PC-3 (cell line): ENCODE measurements at regions of chr3 and their contacts with region 1.

Region 1: DNA sequence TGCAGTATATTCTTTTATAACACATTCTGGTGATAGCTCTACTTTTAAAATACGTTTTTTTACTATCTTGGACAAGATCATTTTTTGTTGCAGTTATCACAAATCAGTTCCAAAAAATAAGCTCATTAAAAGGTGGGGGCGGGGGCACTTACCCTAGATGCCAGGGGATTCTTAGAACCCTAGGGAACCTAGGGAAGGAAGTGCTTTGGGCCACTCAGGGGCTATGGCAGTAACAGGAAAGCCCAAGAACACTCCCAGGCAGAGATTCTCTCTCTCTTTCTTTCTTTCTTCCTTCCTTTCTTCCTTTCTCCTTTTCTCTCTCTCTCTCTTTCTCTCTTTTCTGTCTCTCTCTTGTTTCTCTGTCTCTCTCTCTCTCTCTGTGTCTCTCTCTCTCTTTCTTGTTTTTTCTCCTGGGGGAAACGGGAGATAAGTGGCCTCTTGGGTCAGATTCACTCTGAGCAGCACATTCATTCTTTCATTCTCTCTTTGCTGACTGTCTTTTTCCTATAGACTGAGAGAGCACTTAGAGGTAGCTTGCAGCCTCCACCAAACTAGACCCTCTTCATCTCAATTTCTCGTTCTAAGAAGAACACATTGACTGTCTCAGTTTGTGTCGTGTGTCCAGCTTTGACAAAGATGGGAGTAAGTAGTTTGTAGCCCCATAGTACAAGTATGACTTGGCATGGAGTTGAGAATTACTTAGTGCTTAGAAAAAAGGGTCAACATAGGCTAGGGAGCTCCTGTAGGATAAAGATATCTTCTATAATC is 16.6 kb downstream of the SCAANT1 start:
- DNase-seq: no peak
- ATAC-seq: no peak
- H3K4me3 ChIP-seq: no peak overlapping the region
- H3K27ac ChIP-seq: no peak overlapping the region
- H3K4me1 ChIP-seq: no peaks in the 10 kb centered on the region
- H3K27me3 ChIP-seq: no peaks in the 10 kb centered on the region
- CTCF ChIP-seq: no peak

Region 2: GRCh38 chr3:63876260-63876659 is 19.3 kb before region 1 on chr3:
- CTCF ChIA-PET with region 1: no interaction called
- POLR2A ChIA-PET with region 1: interaction called, 19 read pairs
- intact Hi-C with region 1: no loop called
- DNase-seq: no peak
- ATAC-seq: no peak
- H3K4me3 ChIP-seq: no peak overlapping the region
- H3K27ac ChIP-seq: no peak overlapping the region
- H3K4me1 ChIP-seq: peaks cover 11% of the 10 kb centered on the region
- H3K27me3 ChIP-seq: no peaks in the 10 kb centered on the region
- CTCF ChIP-seq: no peak

Region 3: DNA sequence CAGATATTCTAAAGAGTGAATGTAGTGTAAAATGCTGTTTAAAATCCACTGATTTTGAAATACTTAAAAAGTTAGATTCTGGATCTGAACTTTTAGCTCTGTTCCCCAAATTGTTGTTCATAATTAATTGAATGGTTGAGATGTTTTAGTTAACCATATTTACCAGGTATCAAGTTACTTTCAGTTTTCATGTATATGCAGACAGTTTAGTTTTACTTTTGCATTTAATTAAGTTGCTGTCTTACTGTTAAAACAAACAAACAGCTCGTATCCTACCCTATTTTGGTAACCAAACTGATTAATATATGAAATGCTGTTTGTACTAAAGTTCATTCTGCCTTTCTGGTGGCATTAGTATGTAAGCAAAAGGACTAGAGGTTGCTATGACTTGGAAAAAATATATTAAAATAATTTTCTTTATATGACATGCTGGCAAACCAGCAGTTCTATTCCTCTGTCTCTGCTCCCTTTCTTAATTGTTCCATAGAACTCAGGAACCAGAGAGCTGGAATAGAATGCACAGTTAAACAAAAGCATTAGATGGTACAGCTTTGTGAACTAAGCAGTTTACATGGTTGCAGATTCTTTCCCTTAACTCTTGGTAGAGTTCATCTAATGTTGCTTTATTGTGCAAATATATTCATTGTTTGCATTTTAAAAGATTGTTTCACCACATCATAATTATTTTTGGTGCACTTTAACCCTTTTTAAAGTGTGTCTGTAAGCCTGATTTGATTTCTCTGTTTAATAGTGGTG is 56.1 kb after region 1 on chr3:
- CTCF ChIA-PET with region 1: no interaction called
- POLR2A ChIA-PET with region 1: no interaction called
- intact Hi-C with region 1: no loop called
- DNase-seq: no peak
- ATAC-seq: no peak
- H3K4me3 ChIP-seq: no peak overlapping the region
- H3K27ac ChIP-seq: no peak overlapping the region
- H3K4me1 ChIP-seq: no peaks in the 10 kb centered on the region
- H3K27me3 ChIP-seq: no peaks in the 10 kb centered on the region
- CTCF ChIP-seq: no peak